GM12878 (cell line): ENCODE measurements at regions of chr1 and their contacts with region 1.

Region 1: GRCh38 chr1:117895482-117896114 is 33.8 kb downstream of the GDAP2 start:
- DNase-seq: peak; percentile 32
- ATAC-seq: peak; percentile 98
- H3K4me3 ChIP-seq: no peak overlapping the region
- H3K27ac ChIP-seq: no peak overlapping the region
- H3K4me1 ChIP-seq: no peaks in the 10 kb centered on the region
- H3K27me3 ChIP-seq: no peaks in the 10 kb centered on the region
- CTCF ChIP-seq: peak; percentile 73 to 82 (median 81); a peak in 5 of 6 replicates
- EP300 ChIP-seq: peak in 1 of 2 experiments; percentile 45; a peak in 1 of 4 replicates
- POLR2A ChIP-seq: no peak
- RAD21 ChIP-seq: peak; percentile 86

Region 2: DNA sequence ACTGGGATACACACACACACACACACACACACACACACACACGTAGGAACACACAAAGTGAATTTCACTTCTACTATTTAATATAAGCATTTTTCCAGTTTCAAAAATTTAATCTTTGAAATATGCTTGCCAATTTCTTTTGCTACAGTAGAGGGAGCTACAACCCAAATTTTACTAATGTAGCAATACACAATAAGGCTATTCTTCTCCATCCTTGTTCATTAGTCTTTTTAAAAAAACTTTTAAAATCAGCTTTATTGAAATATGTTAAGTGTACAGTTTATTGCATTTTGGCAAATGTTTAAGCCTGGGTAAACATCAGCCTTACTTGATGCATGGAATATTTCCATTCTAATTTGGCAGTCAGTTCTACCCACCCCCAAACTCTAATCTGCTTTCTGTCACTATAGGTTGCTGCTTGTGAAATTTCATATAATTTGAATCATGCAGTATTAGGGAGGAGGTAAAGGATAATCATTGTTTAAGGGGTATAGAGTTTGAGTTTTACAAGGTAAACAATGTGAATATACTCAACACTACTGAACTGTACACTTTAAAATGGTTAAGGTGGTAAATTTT is 382.8 kb before region 1 on chr1:
- CTCF ChIA-PET with region 1: interaction called, 4 read pairs
- POLR2A ChIA-PET with region 1: no interaction called
- RAD21 ChIA-PET with region 1: interaction called, 3 read pairs
- SMC1A ChIA-PET with region 1: interaction called, 9 read pairs
- in situ Hi-C with region 1: no loop called
- intact Hi-C with region 1: loop called (anchors 5 kb)
- DNase-seq: no peak
- ATAC-seq: peak; percentile 41; the same call in 1 of the 3 replicates
- H3K4me3 ChIP-seq: no peak overlapping the region
- H3K27ac ChIP-seq: no peak overlapping the region
- H3K4me1 ChIP-seq: no peaks in the 10 kb centered on the region
- H3K27me3 ChIP-seq: no peaks in the 10 kb centered on the region
- CTCF ChIP-seq: peak; percentile 42 to 66 (median 48); a peak in 5 of 6 replicates
- EP300 ChIP-seq: no peak
- POLR2A ChIP-seq: no peak
- RAD21 ChIP-seq: peak; percentile 66

Region 3: DNA sequence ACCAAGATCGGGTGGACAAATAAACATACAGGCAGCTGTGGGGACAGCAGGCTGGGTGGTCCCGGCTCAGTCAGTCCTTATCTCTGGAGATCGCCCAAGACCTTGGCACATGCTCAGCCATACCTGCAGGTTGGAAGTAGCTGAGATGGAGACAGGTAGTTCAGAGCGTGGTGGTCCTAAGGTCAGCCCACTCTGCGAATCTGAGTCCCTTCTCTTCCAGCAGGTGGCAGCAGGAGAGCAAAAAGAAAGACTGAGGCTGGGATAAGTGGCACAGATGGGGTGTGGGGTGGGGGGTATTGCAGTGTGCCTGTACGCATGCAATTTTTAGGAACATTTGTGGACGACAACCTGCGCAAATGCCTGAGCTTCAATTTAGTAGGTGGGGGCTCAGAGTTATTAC is 184.9 kb before region 1 on chr1:
- CTCF ChIA-PET with region 1: interaction called, 3 read pairs
- POLR2A ChIA-PET with region 1: no interaction called
- RAD21 ChIA-PET with region 1: no interaction called
- SMC1A ChIA-PET with region 1: no interaction called
- in situ Hi-C with region 1: no loop called
- intact Hi-C with region 1: loop called (anchors 5 kb)
- DNase-seq: no peak
- ATAC-seq: peak; percentile 53
- H3K4me3 ChIP-seq: no peak overlapping the region
- H3K27ac ChIP-seq: no peak overlapping the region
- H3K4me1 ChIP-seq: no peaks in the 10 kb centered on the region
- H3K27me3 ChIP-seq: no peaks in the 10 kb centered on the region
- CTCF ChIP-seq: peak; percentile 20 to 48 (median 39); a peak in 4 of 6 replicates
- EP300 ChIP-seq: no peak
- POLR2A ChIP-seq: no peak
- RAD21 ChIP-seq: peak; percentile 29

Region 4: DNA sequence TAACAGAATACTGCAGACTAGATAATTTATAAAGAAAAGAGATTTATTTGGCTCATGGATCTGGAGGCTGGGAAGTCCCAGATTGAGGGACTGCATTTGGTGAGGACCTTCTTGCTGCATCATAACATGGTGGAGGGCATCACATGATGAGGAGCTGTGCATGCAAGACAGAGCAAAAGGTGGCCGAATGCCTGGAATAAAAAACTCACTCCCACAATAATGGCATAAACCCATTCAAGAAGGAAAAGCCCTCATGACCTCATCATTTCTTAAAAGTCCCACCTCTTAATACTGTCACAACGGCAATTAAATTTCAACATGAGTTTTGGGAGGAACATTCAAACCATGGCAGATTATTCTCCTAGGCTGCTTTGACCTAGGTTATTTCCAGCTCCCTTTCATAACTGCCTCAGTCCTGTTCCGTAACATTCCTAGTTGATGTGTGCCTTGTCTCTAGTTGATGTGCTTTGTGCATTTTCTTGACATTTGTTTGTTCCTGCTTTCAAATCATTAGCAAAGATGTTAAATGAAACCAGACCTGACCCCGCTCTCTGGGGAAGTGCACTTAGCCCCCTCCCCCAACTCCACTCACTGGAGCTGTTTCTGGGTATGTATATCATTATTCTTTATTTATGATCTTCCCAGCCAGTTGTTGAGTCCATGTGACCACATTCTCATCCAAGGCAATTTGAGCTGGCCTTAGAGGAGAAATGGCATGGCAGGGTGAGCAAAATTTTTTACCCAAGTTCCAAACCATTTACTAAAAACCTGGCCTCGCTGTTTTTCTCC is 114.7 kb before region 1 on chr1:
- CTCF ChIA-PET with region 1: no interaction called
- POLR2A ChIA-PET with region 1: no interaction called
- RAD21 ChIA-PET with region 1: no interaction called
- SMC1A ChIA-PET with region 1: no interaction called
- in situ Hi-C with region 1: no loop called
- intact Hi-C with region 1: no loop called
- DNase-seq: no peak
- ATAC-seq: no peak
- H3K4me3 ChIP-seq: no peak overlapping the region
- H3K27ac ChIP-seq: no peak overlapping the region
- H3K4me1 ChIP-seq: no peaks in the 10 kb centered on the region
- H3K27me3 ChIP-seq: no peaks in the 10 kb centered on the region
- CTCF ChIP-seq: no peak
- EP300 ChIP-seq: no peak
- POLR2A ChIP-seq: no peak
- RAD21 ChIP-seq: no peak

Region 5: DNA sequence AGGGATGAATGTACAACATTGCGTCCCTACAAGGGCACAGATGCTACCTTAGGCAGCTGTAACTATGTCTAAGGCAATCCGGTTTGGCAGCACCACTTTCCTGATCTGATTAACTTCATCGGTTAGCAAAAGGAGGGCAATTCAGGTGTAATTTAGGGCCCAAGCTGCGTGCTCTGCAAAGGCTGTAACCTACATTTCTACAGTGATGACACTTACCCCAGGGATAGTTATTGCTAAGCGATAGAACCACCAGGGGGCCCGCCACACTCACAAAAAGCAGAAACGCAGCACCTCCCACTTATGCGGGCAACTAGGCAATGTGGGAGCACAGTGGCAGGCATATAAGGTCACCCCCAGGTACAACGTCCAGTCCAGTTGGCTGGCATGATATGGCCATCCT is 79.7 kb before region 1 on chr1:
- CTCF ChIA-PET with region 1: interaction called, 11 read pairs
- POLR2A ChIA-PET with region 1: no interaction called
- RAD21 ChIA-PET with region 1: no interaction called
- SMC1A ChIA-PET with region 1: interaction called, 6 read pairs
- in situ Hi-C with region 1: no loop called
- intact Hi-C with region 1: loop called (anchors 5 kb)
- DNase-seq: no peak
- ATAC-seq: 0 out of 3 replicates have a peak, but pooled peaks have one; percentile 27
- H3K4me3 ChIP-seq: no peak overlapping the region
- H3K27ac ChIP-seq: no peak overlapping the region
- H3K4me1 ChIP-seq: no peaks in the 10 kb centered on the region
- H3K27me3 ChIP-seq: no peaks in the 10 kb centered on the region
- CTCF ChIP-seq: no peak
- EP300 ChIP-seq: no peak
- POLR2A ChIP-seq: no peak
- RAD21 ChIP-seq: no peak

Region 6: GRCh38 chr1:117877823-117878222 is 17.8 kb before region 1 on chr1:
- CTCF ChIA-PET with region 1: interaction called, 23 read pairs
- POLR2A ChIA-PET with region 1: no interaction called
- RAD21 ChIA-PET with region 1: no interaction called
- SMC1A ChIA-PET with region 1: interaction called, 4 read pairs
- in situ Hi-C with region 1: no loop called
- intact Hi-C with region 1: no loop called
- DNase-seq: no peak
- ATAC-seq: no peak
- H3K4me3 ChIP-seq: no peak overlapping the region
- H3K27ac ChIP-seq: no peak overlapping the region
- H3K4me1 ChIP-seq: no peaks in the 10 kb centered on the region
- H3K27me3 ChIP-seq: no peaks in the 10 kb centered on the region
- CTCF ChIP-seq: no peak
- EP300 ChIP-seq: no peak
- POLR2A ChIP-seq: no peak
- RAD21 ChIP-seq: no peak

Region 7: DNA sequence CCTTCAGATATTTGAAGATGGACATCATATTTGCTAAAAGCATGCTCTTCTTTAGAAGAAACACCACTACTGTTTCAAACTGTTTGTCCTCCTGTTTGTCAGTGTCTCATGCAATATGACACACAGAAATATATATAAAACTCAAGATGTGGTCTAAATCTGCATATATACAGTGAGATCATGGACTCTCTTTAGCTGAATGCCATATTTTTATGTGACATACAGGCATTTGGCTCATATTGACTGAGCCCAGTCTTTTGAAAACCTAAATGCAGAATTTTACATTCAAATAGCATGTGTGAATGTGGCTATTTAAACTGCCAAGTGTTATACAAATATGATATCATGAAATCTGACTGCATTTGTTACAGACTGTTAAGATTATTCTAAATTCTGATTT is 15.5 kb after region 1 on chr1:
- CTCF ChIA-PET with region 1: interaction called, 29 read pairs
- POLR2A ChIA-PET with region 1: no interaction called
- RAD21 ChIA-PET with region 1: interaction called, 6 read pairs
- SMC1A ChIA-PET with region 1: interaction called, 6 read pairs
- in situ Hi-C with region 1: no loop called
- intact Hi-C with region 1: no loop called
- DNase-seq: no peak
- ATAC-seq: no peak
- H3K4me3 ChIP-seq: no peak overlapping the region
- H3K27ac ChIP-seq: no peak overlapping the region
- H3K4me1 ChIP-seq: no peaks in the 10 kb centered on the region
- H3K27me3 ChIP-seq: no peaks in the 10 kb centered on the region
- CTCF ChIP-seq: no peak
- EP300 ChIP-seq: no peak
- POLR2A ChIP-seq: no peak
- RAD21 ChIP-seq: no peak

Region 8: GRCh38 chr1:117929173-117929989 is 33.8 kb after region 1 on chr1 and contains the starts of genes GDAP2 and WDR3:
- CTCF ChIA-PET with region 1: interaction called, 33 read pairs
- POLR2A ChIA-PET with region 1: interaction called, 5 read pairs
- RAD21 ChIA-PET with region 1: interaction called, 6 read pairs
- SMC1A ChIA-PET with region 1: interaction called, 8 read pairs
- in situ Hi-C with region 1: no loop called
- intact Hi-C with region 1: no loop called
- DNase-seq: peak; percentile 79
- ATAC-seq: peak; percentile 92
- H3K4me3 ChIP-seq: peak within 1 kb of the TSS; percentile 84
- H3K27ac ChIP-seq: peak within 1 kb of the TSS; percentile 61
- H3K4me1 ChIP-seq: 0 out of 2 replicates have a peak, but pooled peaks cover 2% of the 10 kb centered on the region
- H3K27me3 ChIP-seq: no peaks in the 10 kb centered on the region
- CTCF ChIP-seq: no peak
- EP300 ChIP-seq: no peak
- POLR2A ChIP-seq: peak; percentile 83
- RAD21 ChIP-seq: no peak
- polyA plus RNA-seq, gene GDAP2: 2.6 to 4.0 TPM
- polyA plus RNA-seq, gene WDR3: 26.1 to 38.9 TPM